ENCODE measurements at regions of chr2 and their contacts with region 1.

Region 1: DNA sequence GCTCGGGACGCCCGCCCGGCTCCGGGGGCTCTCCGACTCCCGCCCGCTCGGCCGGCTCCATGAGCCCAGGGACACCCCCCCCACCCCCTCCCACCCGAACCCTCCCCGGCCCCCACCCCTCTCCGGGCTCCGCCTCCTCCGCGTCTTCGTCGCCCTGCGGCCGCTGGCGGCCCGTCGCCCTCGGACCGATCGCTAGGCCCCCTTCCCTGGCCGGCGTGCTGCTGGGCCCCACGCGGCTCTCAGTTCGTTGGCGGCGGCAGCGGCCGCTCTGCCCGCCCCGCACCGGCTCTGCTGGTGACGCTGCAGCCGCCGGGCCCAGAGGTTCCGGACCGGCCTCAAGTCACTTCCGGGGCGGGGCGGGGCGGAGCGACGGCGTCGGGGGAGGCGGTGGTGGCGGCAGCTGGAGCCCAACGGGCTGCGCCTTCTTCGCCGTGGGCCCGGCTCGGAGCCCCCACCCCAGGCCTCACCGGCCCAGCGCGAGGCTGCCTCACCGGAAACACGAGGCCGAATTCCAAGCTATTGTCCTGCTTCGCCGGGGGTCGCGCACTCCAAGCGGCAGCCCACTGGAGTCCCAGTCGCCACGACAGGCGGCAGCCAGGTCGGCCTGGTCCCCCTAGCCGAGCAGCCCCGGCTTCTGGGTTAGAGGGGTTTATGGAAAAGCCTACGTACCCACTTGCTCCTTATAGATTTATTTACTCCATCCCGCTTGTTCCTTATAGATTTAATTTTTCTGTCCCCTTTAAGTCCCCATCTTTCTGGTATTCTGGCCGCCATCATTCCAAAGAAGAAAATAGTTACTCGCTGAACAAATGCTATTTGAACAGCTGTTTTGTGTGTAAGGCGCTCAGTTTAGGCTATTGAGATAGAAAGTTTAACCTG is at the start of gene PSME4:
- DNase-seq: no peak
- ATAC-seq: peak; percentile 86
- H3K4me3 ChIP-seq: peak within 1 kb of the TSS; percentile 100
- H3K27ac ChIP-seq: peak within 1 kb of the TSS; percentile 86
- H3K4me1 ChIP-seq: peaks cover 4% of the 10 kb centered on the region; the same call in 1 of the 2 replicates
- H3K27me3 ChIP-seq: no peaks in the 10 kb centered on the region
- CTCF ChIP-seq: no peak
- EP300 ChIP-seq: no peak
- POLR2A ChIP-seq: peak; percentile 98
- RAD21 ChIP-seq: no peak
- polyA plus RNA-seq, gene PSME4: 20.2 to 29.7 TPM

Region 2: DNA sequence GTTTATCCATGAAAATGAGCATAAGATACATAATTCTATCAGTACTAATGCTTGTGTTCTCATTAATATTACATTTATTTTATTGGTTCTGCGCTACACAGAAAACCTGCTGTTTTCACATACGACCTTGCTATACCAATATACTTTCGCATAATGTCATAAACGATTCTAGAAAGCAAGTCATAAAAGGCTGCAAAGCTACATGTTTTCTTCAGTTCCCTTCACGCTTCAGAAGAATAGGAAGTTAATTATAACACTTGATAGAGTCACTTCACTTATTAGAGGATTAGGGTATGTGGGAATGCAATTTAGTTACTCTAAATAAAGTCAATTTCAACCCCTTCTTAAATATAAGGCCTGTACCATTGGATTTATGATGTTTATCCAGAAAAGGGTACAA is 29.2 kb before region 1 on chr2:
- CTCF ChIA-PET with region 1: interaction called, 3 read pairs
- POLR2A ChIA-PET with region 1: interaction called, 9 read pairs
- RAD21 ChIA-PET with region 1: interaction called, 13 read pairs
- SMC1A ChIA-PET with region 1: interaction called, 20 read pairs
- in situ Hi-C with region 1: no loop called
- intact Hi-C with region 1: no loop called
- DNase-seq: no peak
- ATAC-seq: peak; percentile 42
- H3K4me3 ChIP-seq: no peak overlapping the region
- H3K27ac ChIP-seq: peak overlapping the region; percentile 47
- H3K4me1 ChIP-seq: peaks cover 22% of the 10 kb centered on the region; the same call in 1 of the 2 replicates
- H3K27me3 ChIP-seq: no peaks in the 10 kb centered on the region
- CTCF ChIP-seq: no peak
- EP300 ChIP-seq: no peak
- POLR2A ChIP-seq: no peak
- RAD21 ChIP-seq: no peak

Region 3: GRCh38 chr2:54081574-54081973 is 110.6 kb after region 1 on chr2:
- CTCF ChIA-PET with region 1: no interaction called
- POLR2A ChIA-PET with region 1: interaction called, 4 read pairs
- RAD21 ChIA-PET with region 1: interaction called, 6 read pairs
- SMC1A ChIA-PET with region 1: interaction called, 3 read pairs
- in situ Hi-C with region 1: no loop called
- intact Hi-C with region 1: loop called (anchors 1 kb)
- DNase-seq: peak; percentile 87
- ATAC-seq: peak; percentile 95
- H3K4me3 ChIP-seq: no peak overlapping the region
- H3K27ac ChIP-seq: 0 out of 2 replicates have a peak overlapping the region, but pooled peaks have one; percentile 28
- H3K4me1 ChIP-seq: peaks cover 8% of the 10 kb centered on the region
- H3K27me3 ChIP-seq: peaks cover 0 to 3% of the 10 kb centered on the region in 2 experiments; a peak in 1 of 4 replicates
- CTCF ChIP-seq: no peak
- EP300 ChIP-seq: peak; percentile 98 to 99
- POLR2A ChIP-seq: no peak
- RAD21 ChIP-seq: peak; percentile 26; the same call in 1 of the 2 replicates